MCF 10A (cell line): ENCODE measurements at regions of chr1 and their contacts with region 1.

Region 1: DNA sequence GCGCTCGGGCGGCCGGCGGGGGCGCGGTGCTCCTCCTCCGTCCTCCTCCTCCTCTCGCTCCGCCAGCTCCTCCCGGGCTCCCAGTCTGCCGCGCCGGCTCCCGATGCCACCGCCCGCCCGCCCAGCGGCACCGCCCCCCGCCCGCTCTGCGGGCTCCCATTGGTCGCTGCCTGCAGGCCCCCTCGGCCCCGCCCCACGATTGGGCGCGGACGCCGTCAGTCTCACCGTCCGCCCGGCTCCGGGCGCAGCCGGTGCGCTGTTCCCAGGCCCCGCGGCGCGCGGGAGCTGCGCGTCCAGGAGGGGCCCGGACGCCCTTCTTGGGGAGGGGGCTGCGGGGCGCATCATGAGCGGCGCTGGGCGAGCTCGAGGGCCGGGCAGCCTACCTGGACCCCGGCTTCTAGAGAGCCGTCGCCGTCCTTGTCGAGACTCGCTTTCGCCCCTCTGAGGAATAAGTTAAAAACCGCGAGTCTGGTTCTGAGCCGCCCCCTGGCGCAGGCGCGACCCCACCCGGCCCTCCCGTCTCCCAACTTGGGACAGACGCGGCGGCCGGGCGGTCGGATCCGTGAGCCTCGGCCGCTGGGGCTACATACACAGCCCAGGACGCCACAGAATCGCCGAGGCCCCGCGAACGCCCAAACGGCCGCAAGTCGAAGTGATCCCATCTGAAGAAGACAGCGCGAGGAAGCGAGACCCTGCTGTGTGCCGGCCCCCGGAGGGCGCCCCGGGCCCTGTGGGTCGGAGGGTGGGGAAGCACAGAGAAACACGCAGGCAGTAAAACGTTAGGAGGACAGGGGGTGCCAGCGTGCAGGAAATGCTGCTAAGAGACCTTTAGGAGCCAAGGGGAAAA is at the start of gene SIPA1L2:
- DNase-seq: peak; percentile 97
- H3K4me3 Mint-ChIP-seq: peak within 1 kb of the TSS; percentile 97
- H3K27ac Mint-ChIP-seq: peak within 1 kb of the TSS; percentile 76
- H3K4me1 Mint-ChIP-seq: peaks cover 33% of the 10 kb centered on the region
- H3K27me3 Mint-ChIP-seq: no peaks in the 10 kb centered on the region
- CTCF ChIP-seq: peak; percentile 72
- total RNA-seq, gene SIPA1L2: 15.2 and 18.3 TPM in 2 replicates

Region 2: DNA sequence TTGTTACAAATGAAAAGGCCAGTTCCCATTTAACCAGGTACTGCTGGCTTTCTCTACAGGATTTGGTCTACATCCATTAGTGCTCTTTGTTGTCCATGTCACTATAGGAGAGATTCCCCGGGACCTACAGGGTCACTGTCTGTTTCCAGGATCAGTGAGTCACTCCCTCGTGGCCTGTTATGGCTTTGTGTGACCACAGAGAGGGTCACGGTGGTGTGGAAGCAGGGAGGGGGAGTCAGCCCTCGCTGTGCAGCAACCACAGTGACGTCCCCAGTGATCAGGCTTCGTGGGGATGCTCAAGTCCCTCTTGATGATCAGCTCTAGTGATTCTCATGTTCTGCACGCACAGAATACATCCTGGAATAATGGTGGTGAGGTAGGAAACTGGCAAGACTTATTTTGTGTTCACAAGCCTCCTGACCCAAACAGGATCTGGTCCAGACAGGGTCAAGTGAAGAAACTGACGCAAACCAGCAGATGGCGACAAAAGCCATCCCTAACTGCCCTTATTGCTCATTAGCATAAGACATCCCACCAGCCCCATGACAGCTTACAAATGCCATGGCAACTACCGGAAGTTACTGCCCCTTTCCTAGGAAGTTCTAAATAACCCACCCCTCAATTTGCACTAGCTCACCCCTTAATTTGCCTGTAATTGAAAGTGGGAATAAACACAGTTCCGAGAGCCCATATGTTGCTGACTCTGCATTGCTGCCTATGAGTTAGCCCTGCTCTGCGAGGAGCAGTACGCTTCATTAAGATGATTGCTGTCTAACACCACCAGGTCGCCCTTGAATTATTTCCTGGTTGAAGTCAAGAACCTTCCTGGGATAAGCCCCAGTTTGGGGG is 905.2 kb before region 1 on chr1:
- CTCF ChIA-PET with region 1: interaction called, 24 read pairs
- POLR2A ChIA-PET with region 1: interaction called, 3 read pairs
- intact Hi-C with region 1: loop called (anchors 1 kb)
- DNase-seq: peak; percentile 90
- H3K4me3 Mint-ChIP-seq: no peak overlapping the region
- H3K27ac Mint-ChIP-seq: no peak overlapping the region
- H3K4me1 Mint-ChIP-seq: no peaks in the 10 kb centered on the region
- H3K27me3 Mint-ChIP-seq: no peaks in the 10 kb centered on the region
- CTCF ChIP-seq: peak; percentile 79

Region 3: DNA sequence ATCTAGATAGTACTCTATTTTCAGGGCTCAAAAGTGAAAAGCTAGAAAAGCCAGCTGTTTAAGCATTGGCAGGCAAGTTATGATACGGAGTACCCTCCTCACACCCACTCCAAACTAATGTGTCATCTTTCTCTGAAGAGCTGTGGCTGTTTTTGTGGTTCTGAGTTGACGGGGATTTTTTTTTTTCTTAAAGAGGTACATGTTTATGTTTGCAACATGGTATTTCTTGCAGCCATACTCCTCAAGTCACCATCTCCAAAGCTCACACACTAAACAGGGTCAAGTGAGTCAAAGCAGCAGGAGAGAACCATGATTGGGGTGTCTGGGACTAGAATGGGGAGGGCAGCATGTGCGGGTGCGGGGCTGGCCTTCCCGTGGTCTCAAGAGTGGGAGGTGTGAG is 656.4 kb before region 1 on chr1:
- CTCF ChIA-PET with region 1: interaction called, 5 read pairs
- POLR2A ChIA-PET with region 1: interaction called, 3 read pairs
- intact Hi-C with region 1: loop called (anchors 2 kb)
- DNase-seq: no peak
- H3K4me3 Mint-ChIP-seq: no peak overlapping the region
- H3K27ac Mint-ChIP-seq: no peak overlapping the region
- H3K4me1 Mint-ChIP-seq: peaks cover 13% of the 10 kb centered on the region
- H3K27me3 Mint-ChIP-seq: no peaks in the 10 kb centered on the region
- CTCF ChIP-seq: no peak

Region 4: GRCh38 chr1:232385221-232385620 is 245.0 kb before region 1 on chr1:
- CTCF ChIA-PET with region 1: interaction called, 10 read pairs
- POLR2A ChIA-PET with region 1: no interaction called
- intact Hi-C with region 1: loop called (anchors 10 kb)
- DNase-seq: peak; percentile 88
- H3K4me3 Mint-ChIP-seq: no peak overlapping the region
- H3K27ac Mint-ChIP-seq: peak overlapping the region; percentile 1
- H3K4me1 Mint-ChIP-seq: peaks cover 27% of the 10 kb centered on the region
- H3K27me3 Mint-ChIP-seq: no peaks in the 10 kb centered on the region
- CTCF ChIP-seq: no peak

Region 5: DNA sequence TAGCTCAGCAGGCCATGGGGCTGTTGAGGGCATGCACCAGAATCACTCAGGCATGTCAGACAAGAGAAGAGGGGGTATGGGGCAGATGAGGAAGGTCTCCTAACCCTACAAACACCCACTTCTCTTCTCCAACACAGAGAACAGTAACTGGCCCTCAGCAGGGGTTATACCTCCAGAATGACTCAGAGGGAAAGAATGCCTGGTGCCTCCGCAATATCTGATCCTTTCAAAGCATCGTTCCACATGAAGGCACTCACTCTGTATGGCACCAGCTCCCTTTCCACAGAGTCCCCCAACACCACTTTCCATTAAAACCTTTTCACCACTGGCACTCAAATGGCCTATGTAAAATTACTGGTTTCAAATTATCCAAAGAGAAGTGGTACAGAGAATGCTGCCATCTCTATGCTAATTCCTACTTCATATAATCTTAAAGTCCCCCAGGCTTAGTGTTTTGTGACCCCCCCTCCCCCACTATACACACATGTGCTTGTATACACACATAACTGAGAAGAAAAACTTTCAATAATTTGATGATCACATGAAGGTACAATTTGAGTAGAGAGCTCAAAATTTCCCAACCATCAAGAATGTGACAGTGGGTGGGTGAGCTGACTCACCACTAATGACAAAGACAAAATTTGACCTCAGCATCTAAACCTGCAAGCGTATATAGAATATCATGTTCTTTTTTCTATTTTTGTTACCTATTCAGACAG is 91.9 kb before region 1 on chr1:
- CTCF ChIA-PET with region 1: interaction called, 23 read pairs
- POLR2A ChIA-PET with region 1: interaction called, 24 read pairs
- intact Hi-C with region 1: no loop called
- DNase-seq: peak; percentile 93
- H3K4me3 Mint-ChIP-seq: peak overlapping the region; percentile 48
- H3K27ac Mint-ChIP-seq: peak overlapping the region; percentile 86
- H3K4me1 Mint-ChIP-seq: peaks cover 48% of the 10 kb centered on the region
- H3K27me3 Mint-ChIP-seq: no peaks in the 10 kb centered on the region
- CTCF ChIP-seq: no peak

Region 6: DNA sequence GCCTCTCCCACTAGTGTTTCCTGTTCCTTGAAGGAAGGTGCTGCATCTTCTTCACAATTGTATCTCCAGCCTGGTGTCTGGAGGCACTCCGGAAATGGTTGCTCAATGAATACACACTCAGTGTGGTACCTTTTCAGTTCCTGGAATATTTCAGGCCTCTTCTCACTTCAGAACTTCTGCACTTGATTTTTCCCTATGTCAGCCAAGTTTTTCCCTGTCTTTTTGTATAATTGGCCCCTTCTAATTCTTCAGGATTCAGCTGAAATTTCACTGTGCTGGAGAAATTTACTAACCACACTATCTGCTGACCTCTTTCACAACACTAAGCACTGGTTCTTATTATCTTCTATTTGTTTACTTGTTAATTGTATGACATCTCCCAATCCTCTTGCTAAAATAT is 113.7 kb after region 1 on chr1:
- CTCF ChIA-PET with region 1: no interaction called
- POLR2A ChIA-PET with region 1: no interaction called
- intact Hi-C with region 1: no loop called
- DNase-seq: no peak
- H3K4me3 Mint-ChIP-seq: no peak overlapping the region
- H3K27ac Mint-ChIP-seq: no peak overlapping the region
- H3K4me1 Mint-ChIP-seq: peaks cover 8% of the 10 kb centered on the region
- H3K27me3 Mint-ChIP-seq: no peaks in the 10 kb centered on the region
- CTCF ChIP-seq: no peak

Region 7: DNA sequence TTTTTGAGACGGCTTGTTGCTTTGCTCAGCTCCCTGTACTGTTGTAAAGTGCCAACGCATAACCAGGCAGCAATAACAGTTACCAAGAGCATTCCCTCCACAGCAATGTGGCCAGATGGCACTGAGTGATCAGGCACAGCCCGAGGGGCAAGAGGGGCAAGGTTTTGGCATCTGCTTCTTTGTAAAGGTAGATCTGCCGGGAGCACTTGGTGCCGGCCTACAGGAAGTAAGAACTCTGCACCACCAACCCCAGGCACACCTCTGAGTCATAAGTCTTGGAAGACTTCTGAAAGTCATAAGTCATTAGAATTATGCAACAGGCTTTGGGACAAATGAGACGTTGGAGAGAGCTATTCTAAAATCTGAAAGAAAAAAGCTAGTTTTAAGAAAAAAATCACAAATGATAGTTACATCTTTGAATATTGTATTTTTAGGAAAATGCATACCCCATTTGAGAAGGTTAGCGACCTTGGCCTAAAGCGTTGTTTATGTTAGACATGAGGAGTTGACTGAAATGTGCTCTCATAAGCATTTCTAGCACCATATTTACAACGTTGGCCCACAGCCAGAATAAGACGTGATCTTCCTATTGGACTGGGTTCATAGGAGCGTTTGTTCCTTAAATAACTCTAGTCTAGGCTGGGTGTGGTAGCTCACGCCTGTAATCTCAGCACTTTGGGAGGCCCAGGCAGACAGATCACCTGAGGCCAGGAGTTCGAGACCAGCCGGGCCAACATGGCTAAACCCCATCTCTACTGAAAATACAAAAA is 137.2 kb after region 1 on chr1:
- CTCF ChIA-PET with region 1: interaction called, 3 read pairs
- POLR2A ChIA-PET with region 1: interaction called, 10 read pairs
- intact Hi-C with region 1: no loop called
- DNase-seq: peak; percentile 100
- H3K4me3 Mint-ChIP-seq: peak overlapping the region; percentile 11
- H3K27ac Mint-ChIP-seq: peak overlapping the region; percentile 43
- H3K4me1 Mint-ChIP-seq: peaks cover 19% of the 10 kb centered on the region
- H3K27me3 Mint-ChIP-seq: no peaks in the 10 kb centered on the region
- CTCF ChIP-seq: no peak

Region 8: GRCh38 chr1:232923739-232924386 is 293.6 kb after region 1 on chr1:
- CTCF ChIA-PET with region 1: no interaction called
- POLR2A ChIA-PET with region 1: no interaction called
- intact Hi-C with region 1: no loop called
- DNase-seq: peak; percentile 16
- H3K4me3 Mint-ChIP-seq: no peak overlapping the region
- H3K27ac Mint-ChIP-seq: no peak overlapping the region
- H3K4me1 Mint-ChIP-seq: no peaks in the 10 kb centered on the region
- H3K27me3 Mint-ChIP-seq: no peaks in the 10 kb centered on the region
- CTCF ChIP-seq: no peak

Region 9: DNA sequence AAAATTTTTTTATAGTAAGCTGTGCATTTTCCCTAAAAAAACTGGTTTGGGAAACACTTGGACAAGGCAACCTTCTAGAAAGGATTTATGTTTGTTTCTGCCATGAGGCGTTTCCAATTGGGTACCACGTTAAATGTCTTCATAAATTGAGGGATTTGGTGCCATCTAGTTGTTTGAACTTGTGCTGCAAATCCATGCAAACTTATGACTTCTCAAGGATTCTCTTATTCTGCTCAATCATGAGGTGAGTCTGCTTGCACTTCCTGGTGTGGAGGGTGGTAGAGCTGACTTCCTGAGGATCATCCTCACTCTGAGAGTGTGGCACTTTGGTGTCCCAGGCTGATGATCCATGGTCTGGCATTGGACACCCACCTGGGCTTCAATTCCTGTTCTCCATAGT is 542.0 kb after region 1 on chr1:
- CTCF ChIA-PET with region 1: interaction called, 5 read pairs
- POLR2A ChIA-PET with region 1: no interaction called
- intact Hi-C with region 1: loop called (anchors 1 kb)
- DNase-seq: peak; percentile 49
- H3K4me3 Mint-ChIP-seq: no peak overlapping the region
- H3K27ac Mint-ChIP-seq: no peak overlapping the region
- H3K4me1 Mint-ChIP-seq: no peaks in the 10 kb centered on the region
- H3K27me3 Mint-ChIP-seq: no peaks in the 10 kb centered on the region
- CTCF ChIP-seq: peak; percentile 15